Gastrocnemius medialis (tissue), 4 donors: ENCODE measurements at regions of chr3 and their contacts with region 1.

Region 1: GRCh38 chr3:34183611-34184313 is 385.3 kb downstream of the PDCD6IP start:
- DNase-seq: no peak
- ATAC-seq: no peak
- H3K4me3 ChIP-seq: no peak overlapping the region
- H3K27ac ChIP-seq: no peak overlapping the region
- H3K4me1 ChIP-seq: no peaks in the 10 kb centered on the region
- H3K27me3 ChIP-seq: no peaks in the 10 kb centered on the region
- CTCF ChIP-seq: no peak
- POLR2A ChIP-seq: no peak

Region 2: DNA sequence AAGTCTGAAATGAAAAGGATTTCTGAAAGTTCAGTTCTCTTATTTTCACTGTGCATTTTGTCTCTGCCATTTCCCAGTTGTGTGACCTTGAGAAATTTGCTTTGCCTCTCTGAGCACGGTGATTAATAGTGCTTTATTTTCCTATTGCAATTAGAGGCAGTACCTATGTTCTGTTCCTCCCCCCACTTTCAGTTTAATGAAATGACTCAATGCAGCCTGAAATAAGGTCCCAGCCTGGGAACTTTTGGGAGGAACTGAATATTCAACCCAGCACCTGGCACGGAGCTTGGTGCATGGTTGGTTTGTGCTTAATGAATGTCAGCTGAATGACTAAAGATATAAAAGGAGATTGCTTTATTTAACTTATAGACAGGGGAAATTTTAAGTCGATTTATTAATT is 32.8 kb before region 1 on chr3:
- in situ Hi-C with region 1: no loop called
- intact Hi-C with region 1: no loop called
- DNase-seq: no peak
- ATAC-seq: no peak
- H3K4me3 ChIP-seq: no peak overlapping the region
- H3K27ac ChIP-seq: no peak overlapping the region
- H3K4me1 ChIP-seq: no peaks in the 10 kb centered on the region
- H3K27me3 ChIP-seq: no peaks in the 10 kb centered on the region
- CTCF ChIP-seq: no peak
- POLR2A ChIP-seq: no peak

Region 3: DNA sequence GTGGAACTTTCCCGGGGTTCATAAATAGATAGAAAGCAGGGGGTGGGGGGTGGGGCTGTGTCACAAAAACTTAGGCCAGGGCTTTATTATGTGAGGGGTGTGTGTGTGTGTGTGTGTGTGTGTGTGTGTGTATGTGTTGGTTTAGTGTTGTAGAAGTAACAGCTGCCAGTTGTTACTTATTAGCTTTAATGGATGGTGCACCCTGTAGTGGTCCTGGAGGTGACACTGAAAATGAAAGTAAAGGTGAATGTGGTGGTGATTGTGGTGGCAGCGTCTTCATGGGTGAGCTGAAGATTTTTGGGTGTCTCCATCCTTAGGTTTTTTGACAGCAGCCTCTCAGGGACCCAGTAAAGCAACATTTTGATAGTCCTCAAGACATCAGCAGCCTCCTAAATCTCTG is 64.6 kb after region 1 on chr3:
- in situ Hi-C with region 1: loop called in 1 of 4 experiments (anchors 10 kb)
- intact Hi-C with region 1: no loop called
- DNase-seq: no peak
- ATAC-seq: no peak
- H3K4me3 ChIP-seq: no peak overlapping the region
- H3K27ac ChIP-seq: no peak overlapping the region
- H3K4me1 ChIP-seq: no peaks in the 10 kb centered on the region
- H3K27me3 ChIP-seq: no peaks in the 10 kb centered on the region
- CTCF ChIP-seq: no peak
- POLR2A ChIP-seq: no peak